Testis (tissue), 5 donors: ENCODE measurements at regions of chr9 and their contacts with region 1.

Region 1: GRCh38 chr9:107465467-107466451 is 23.8 kb downstream of the KLF4 start:
- DNase-seq: peak; percentile 71
- H3K4me3 ChIP-seq: peak overlapping the region; percentile 58 to 72
- H3K27ac ChIP-seq: peak overlapping the region; percentile 7 to 19
- H3K4me1 ChIP-seq: peaks cover 7% of the 10 kb centered on the region
- H3K27me3 ChIP-seq: no peaks in the 10 kb centered on the region
- CTCF ChIP-seq: peak; percentile 62 to 90 (median 80)
- POLR2A ChIP-seq: no peak

Region 2: GRCh38 chr9:108565651-108566378 is 1100.1 kb after region 1 on chr9:
- intact Hi-C with region 1: loop called (anchors 10 kb)
- DNase-seq: peak; percentile 69
- H3K4me3 ChIP-seq: no peak overlapping the region
- H3K27ac ChIP-seq: no peak overlapping the region
- H3K4me1 ChIP-seq: no peaks in the 10 kb centered on the region
- H3K27me3 ChIP-seq: no peaks in the 10 kb centered on the region
- CTCF ChIP-seq: peak; percentile 76 to 86 (median 86)
- POLR2A ChIP-seq: no peak